Caco-2 (cell line): ENCODE measurements at regions of chr17 and their contacts with region 1.

Region 1: DNA sequence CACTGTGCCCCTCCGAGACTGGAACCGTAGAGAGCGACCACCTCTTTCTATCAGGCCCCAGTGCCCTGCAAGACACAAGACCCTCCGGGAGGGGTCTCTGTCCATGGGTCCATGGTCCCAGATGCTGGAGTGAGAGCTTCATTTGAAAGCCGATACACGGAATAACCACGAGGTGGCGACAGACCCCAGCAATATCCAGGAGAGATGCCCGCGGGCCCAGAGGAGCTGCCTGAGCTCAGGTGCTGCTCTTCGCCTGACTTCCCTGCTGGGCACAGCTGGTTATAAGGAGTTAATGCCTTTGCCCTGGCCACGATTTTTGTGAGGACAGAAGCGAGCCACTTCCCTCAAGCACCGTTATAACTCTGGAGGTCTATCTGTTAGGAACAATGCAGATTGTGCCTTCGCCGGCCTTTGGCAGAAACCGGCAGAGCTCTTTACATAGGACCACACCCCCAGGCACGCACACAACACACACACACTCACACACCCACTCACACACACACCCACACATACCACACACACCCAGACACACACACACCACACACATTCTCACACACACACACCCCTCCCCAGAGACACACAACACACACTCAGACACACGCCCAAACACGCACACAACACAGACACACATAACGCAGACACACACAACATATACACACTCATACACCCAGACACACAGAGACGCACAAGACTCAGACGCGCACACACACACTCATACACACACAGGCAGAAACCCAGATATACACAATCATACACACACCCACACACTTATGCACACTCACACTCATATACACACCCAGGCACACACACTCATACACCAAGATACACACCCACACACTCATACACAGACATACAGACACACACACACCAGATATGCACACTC is 436.4 kb downstream of the SOX9 start:
- DNase-seq: peak; percentile 75 to 82
- H3K4me3 ChIP-seq: no peak overlapping the region
- H3K4me3 Mint-ChIP-seq: no peak overlapping the region
- H3K27ac Mint-ChIP-seq: no peak overlapping the region
- H3K4me1 ChIP-seq: no peaks in the 10 kb centered on the region
- H3K4me1 Mint-ChIP-seq: no peaks in the 10 kb centered on the region
- H3K27me3 ChIP-seq: no peaks in the 10 kb centered on the region
- H3K27me3 Mint-ChIP-seq: no peaks in the 10 kb centered on the region
- CTCF ChIP-seq: peak; percentile 82 to 90

Region 2: GRCh38 chr17:72580321-72581127 is 23.3 kb after region 1 on chr17:
- CTCF ChIA-PET with region 1: interaction called, 18 read pairs
- POLR2A ChIA-PET with region 1: no interaction called
- intact Hi-C with region 1: no loop called
- DNase-seq: peak; percentile 78 to 86
- H3K4me3 ChIP-seq: no peak overlapping the region
- H3K4me3 Mint-ChIP-seq: peak overlapping the region; percentile 7
- H3K27ac Mint-ChIP-seq: peak overlapping the region; percentile 90
- H3K4me1 ChIP-seq: peaks cover 29% of the 10 kb centered on the region
- H3K4me1 Mint-ChIP-seq: peaks cover 36% of the 10 kb centered on the region
- H3K27me3 ChIP-seq: no peaks in the 10 kb centered on the region
- H3K27me3 Mint-ChIP-seq: no peaks in the 10 kb centered on the region
- CTCF ChIP-seq: no peak

Region 3: DNA sequence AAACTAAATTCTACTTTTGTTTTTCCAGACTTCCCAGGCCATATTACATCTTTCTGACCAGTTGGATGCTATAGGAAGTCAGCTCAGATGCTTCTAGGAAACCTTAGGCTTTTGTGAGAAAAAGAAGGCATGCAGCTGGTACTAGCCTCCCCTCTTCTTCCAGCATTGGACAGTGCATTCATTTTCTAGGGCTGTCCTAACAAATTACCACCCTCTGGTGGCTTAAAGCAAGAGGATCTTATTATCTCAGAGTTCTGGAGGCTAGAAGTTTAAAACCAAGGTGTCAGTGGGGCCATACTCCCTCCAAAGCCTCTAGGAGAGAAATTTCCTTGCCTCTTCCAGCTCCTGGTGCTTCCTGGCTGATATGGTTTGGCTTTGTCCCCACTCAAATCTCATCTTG is 67.5 kb after region 1 on chr17:
- CTCF ChIA-PET with region 1: interaction called, 6 read pairs
- POLR2A ChIA-PET with region 1: no interaction called
- intact Hi-C with region 1: loop called (anchors 2 kb)
- DNase-seq: no peak
- H3K4me3 ChIP-seq: no peak overlapping the region
- H3K4me3 Mint-ChIP-seq: no peak overlapping the region
- H3K27ac Mint-ChIP-seq: no peak overlapping the region
- H3K4me1 ChIP-seq: no peaks in the 10 kb centered on the region
- H3K4me1 Mint-ChIP-seq: peaks cover 6% of the 10 kb centered on the region
- H3K27me3 ChIP-seq: no peaks in the 10 kb centered on the region
- H3K27me3 Mint-ChIP-seq: no peaks in the 10 kb centered on the region
- CTCF ChIP-seq: peak in 1 of 2 experiments; percentile 9

Region 4: GRCh38 chr17:72683506-72684404 is 126.6 kb after region 1 on chr17:
- CTCF ChIA-PET with region 1: interaction called, 15 read pairs
- POLR2A ChIA-PET with region 1: no interaction called
- intact Hi-C with region 1: no loop called
- DNase-seq: peak; percentile 81 to 90
- H3K4me3 ChIP-seq: no peak overlapping the region
- H3K4me3 Mint-ChIP-seq: peak overlapping the region; percentile 60
- H3K27ac Mint-ChIP-seq: peak overlapping the region; percentile 88
- H3K4me1 ChIP-seq: peaks cover 49% of the 10 kb centered on the region
- H3K4me1 Mint-ChIP-seq: peaks cover 42% of the 10 kb centered on the region
- H3K27me3 ChIP-seq: no peaks in the 10 kb centered on the region
- H3K27me3 Mint-ChIP-seq: no peaks in the 10 kb centered on the region
- CTCF ChIP-seq: no peak

Region 5: GRCh38 chr17:73156166-73156840 is 599.1 kb after region 1 on chr17:
- CTCF ChIA-PET with region 1: interaction called, 10 read pairs
- POLR2A ChIA-PET with region 1: no interaction called
- intact Hi-C with region 1: no loop called
- DNase-seq: peak; percentile 71 to 77
- H3K4me3 ChIP-seq: no peak overlapping the region
- H3K4me3 Mint-ChIP-seq: no peak overlapping the region
- H3K27ac Mint-ChIP-seq: no peak overlapping the region
- H3K4me1 ChIP-seq: peaks cover 19% of the 10 kb centered on the region
- H3K4me1 Mint-ChIP-seq: peaks cover 19% of the 10 kb centered on the region
- H3K27me3 ChIP-seq: no peaks in the 10 kb centered on the region
- H3K27me3 Mint-ChIP-seq: no peaks in the 10 kb centered on the region
- CTCF ChIP-seq: peak; percentile 87